Posterior vena cava (tissue), 2 donors: ENCODE measurements at regions of chr3 and their contacts with region 1.

Region 1: GRCh38 chr3:188220988-188221818 is 67.2 kb downstream of the LPP start:
- DNase-seq: peak; percentile 87

Region 2: DNA sequence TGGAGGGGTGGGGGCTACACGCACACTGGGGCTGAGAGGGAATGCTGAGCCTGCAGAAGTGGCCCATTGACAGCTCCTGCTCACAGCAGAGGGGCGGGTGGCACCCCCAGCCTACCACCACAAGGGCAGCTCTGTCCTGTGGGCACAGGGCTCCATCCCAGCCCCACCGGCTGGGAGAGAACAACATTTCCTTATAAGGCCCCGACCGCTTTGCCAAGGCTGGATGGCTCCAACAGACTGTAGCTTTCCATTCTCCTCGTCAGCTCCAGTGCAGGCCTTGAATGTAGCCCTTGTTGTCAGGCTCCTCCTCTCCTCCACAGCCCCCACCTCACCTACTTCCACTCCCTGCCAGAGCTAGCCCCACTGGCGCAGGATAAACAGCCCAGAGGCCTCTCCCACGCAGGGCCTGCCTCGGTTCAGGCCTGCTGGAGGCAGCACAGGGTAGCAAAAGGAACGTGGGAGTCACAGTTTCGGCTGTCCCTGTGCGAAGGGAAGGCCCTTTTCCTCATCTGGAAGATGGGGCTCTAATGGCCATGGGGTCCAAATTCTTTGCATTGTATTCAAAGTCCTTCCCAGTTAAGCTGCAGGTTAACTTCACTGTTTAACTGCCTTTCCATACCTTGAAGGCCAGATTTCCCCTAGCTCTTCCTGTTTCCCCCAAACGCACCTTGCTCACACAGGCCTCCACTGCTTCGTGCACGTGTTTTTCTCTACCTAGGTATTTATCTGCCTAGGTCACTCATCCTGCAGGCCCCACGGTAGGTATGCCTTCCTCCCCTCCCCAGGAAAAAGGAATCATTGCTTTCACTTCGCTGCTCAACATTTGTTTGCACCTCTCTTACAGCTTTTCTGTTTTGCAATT is 168.8 kb before region 1 on chr3:
- intact Hi-C with region 1: loop called in 1 of 2 experiments (anchors 10 kb)
- DNase-seq: peak; percentile 95